Activated CD4-positive, alpha-beta T cell treated with anti-CD3 and anti-CD28 coated beads, Interleukin-2, amount 10 ng/mL, durations not matched to agents 24 days and 14 days (primary cell): ENCODE measurements at regions of chr10 and their contacts with region 1.

Region 1: DNA sequence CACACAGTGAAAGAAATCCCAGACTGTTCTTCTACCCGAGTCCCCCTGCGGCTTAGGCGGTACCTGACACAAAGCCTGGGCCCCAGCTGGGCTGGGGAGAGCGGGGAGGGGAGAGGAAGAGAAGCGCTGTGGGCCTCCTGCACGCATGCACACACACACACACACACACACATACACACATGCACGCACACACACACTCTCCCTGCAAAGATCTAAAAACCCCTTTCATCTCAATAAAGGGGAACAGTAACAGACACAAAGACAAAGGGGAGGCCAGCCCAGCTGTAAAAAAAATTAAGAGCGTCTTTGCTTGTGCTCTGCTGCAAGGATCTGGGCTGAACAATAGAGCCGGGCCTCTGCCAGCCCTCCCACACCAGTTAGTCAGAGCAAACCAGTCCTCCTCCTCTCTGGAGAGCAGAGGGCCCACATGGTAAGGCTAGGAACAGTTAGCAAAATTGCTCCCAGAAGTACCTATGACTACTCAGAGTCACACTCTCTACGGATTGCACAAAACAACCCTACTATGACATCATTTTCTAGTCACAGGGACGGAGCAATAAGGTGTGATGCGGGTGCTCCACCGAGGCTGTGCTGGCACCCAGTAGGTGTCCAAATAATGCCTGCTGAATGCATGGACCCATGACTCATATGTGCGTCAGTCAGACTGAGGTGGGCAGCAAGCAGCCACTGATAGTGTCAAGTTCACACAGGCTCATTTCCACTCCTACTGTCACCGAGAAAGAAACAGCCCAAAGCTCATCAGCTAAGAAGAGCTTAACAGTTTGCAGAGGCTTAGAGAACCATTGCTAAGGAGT is 9.2 kb downstream of the ITPRIP start:
- DNase-seq: peak; percentile 88
- H3K4me3 Mint-ChIP-seq: peak overlapping the region; percentile 86
- H3K27ac Mint-ChIP-seq: peak overlapping the region; percentile 91
- H3K4me1 Mint-ChIP-seq: peaks cover 89% of the 10 kb centered on the region
- H3K27me3 Mint-ChIP-seq: no peaks in the 10 kb centered on the region

Region 2: DNA sequence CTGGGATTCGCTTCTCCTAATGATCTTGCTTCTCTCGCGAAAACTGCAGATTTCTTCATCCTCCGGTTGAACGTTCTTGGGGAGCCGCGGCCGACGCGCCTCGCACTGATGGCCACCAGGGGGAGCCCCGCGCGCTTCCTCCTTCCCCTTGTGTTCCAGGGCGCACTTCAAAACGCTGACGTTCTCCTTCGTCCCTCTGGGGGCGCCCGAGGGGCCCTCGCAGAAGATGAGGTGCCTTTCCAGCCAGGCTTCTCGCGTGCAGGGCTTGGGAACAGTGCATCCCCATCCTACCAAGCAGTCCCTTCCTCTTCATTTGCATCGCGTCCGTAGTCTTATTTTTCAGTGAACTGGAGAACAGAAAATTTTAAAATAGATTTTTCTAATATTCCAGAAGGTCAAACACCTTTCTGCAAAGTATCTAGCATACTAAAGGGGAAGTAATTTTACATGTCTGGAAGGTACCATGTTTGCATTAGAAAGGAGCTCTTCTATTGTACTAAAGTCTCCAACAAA is 37.6 kb before region 1 on chr10:
- intact Hi-C with region 1: loop called (anchors 1 kb)
- DNase-seq: peak; percentile 96
- H3K4me3 Mint-ChIP-seq: no peak overlapping the region
- H3K27ac Mint-ChIP-seq: no peak overlapping the region
- H3K4me1 Mint-ChIP-seq: peaks cover 13% of the 10 kb centered on the region
- H3K27me3 Mint-ChIP-seq: peaks cover 32% of the 10 kb centered on the region

Region 3: DNA sequence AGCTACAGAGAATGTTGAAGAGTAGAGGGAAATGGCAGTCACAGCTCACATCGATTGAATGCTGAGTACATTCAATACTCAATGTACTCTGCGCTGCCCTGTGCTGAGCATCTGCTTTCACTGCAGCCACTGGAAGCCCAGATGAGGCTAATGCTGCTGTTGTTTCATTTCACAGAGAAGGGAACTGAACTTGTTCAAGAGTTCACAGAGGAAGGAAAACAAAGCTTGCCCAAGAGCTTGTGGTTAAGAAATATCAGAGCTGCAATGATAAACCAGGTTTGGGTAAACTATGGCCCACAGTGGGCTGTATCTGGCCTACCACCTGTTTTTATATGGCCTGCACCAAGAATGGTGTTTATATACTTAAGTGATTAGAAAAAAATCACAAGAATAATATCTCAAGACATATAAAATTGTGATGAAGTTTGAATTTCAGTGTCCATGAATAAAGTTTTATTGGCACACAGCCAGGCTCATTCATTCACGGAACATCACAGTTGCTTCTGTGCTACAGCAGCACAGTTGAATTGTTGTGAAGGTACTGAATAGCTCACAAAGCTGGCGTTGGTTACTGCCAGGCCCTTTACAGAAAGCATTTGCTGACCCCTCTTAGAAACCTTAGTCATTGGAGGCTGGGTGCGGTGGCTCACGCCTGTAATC is 88.7 kb after region 1 on chr10:
- intact Hi-C with region 1: no loop called
- DNase-seq: no peak
- H3K4me3 Mint-ChIP-seq: no peak overlapping the region
- H3K27ac Mint-ChIP-seq: no peak overlapping the region
- H3K4me1 Mint-ChIP-seq: no peaks in the 10 kb centered on the region
- H3K27me3 Mint-ChIP-seq: peaks cover 8% of the 10 kb centered on the region

Region 4: GRCh38 chr10:104559935-104560334 is 230.8 kb after region 1 on chr10:
- intact Hi-C with region 1: no loop called
- DNase-seq: no peak
- H3K4me3 Mint-ChIP-seq: no peak overlapping the region
- H3K27ac Mint-ChIP-seq: no peak overlapping the region
- H3K4me1 Mint-ChIP-seq: no peaks in the 10 kb centered on the region
- H3K27me3 Mint-ChIP-seq: peaks cover 4% of the 10 kb centered on the region